MCF 10A (cell line): ENCODE measurements at regions of chrX and their contacts with region 1.

Region 1: GRCh38 chrX:102768987-102769761 is 48.6 kb downstream of the GPRASP3 start:
- DNase-seq: peak; percentile 81
- H3K4me3 Mint-ChIP-seq: peak overlapping the region; percentile 84
- H3K27ac Mint-ChIP-seq: peak overlapping the region; percentile 98
- H3K4me1 Mint-ChIP-seq: peaks cover 5% of the 10 kb centered on the region
- H3K27me3 Mint-ChIP-seq: no peaks in the 10 kb centered on the region
- CTCF ChIP-seq: no peak

Region 2: GRCh38 chrX:102599084-102599950 is 169.9 kb before region 1 on chrX and contains the start of gene ARMCX5:
- CTCF ChIA-PET with region 1: no interaction called
- POLR2A ChIA-PET with region 1: interaction called, 3 read pairs
- intact Hi-C with region 1: loop called (anchors 5 kb)
- DNase-seq: peak; percentile 85
- H3K4me3 Mint-ChIP-seq: peak within 1 kb of the TSS; percentile 77
- H3K27ac Mint-ChIP-seq: peak within 1 kb of the TSS; percentile 90
- H3K4me1 Mint-ChIP-seq: no peaks in the 10 kb centered on the region
- H3K27me3 Mint-ChIP-seq: peaks cover 14% of the 10 kb centered on the region
- CTCF ChIP-seq: no peak
- total RNA-seq, gene ARMCX5: 15.2 and 16.3 TPM in 2 replicates